ENCODE measurements at regions of chr22 and their contacts with region 1.

Region 1: DNA sequence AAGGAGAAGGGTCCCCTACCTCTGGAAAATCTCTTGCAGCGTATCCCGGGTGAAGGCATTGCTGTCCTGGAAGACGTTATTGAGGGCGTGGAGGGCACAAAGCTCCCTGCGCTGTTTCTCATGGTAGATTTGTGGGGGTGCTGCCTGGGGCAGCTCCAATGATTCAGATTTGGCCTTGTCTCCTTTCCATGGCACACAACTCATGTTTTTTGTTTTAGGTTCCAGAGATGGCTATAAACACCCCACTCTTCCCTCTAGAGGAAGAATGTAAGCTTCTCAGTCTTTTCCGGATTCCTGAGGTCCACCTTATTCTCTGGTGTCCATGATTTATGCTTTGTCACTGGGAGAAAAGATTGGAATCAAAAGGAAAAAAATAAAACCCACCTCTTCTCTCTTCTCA is 959 bp downstream of the JOSD1 start:
- DNase-seq: peak in 1 of 10 donors; percentile 79

Region 2: GRCh38 chr22:38681784-38682335 is 17.9 kb before region 1 on chr22 and contains the start of gene TOMM22:
- intact Hi-C with region 1: loop called (anchors 2 kb)
- DNase-seq: peak; percentile 87 to 99 (median 92)

Region 3: GRCh38 chr22:38733329-38733723 is 33.5 kb after region 1 on chr22:
- intact Hi-C with region 1: no loop called
- DNase-seq: peak in 7 of 10 donors; percentile 49 to 95 (median 68)

Measured in posterior cingulate gyrus (tissue), 11 donors.